PC-3 (cell line): ENCODE measurements at regions of chr13 and their contacts with region 1.

Region 1: GRCh38 chr13:72255908-72256307 is 388.9 kb upstream of the DACH1 start:
- DNase-seq: peak; percentile 70
- ATAC-seq: peak; percentile 84
- H3K4me3 ChIP-seq: no peak overlapping the region
- H3K27ac ChIP-seq: no peak overlapping the region
- H3K4me1 ChIP-seq: peaks cover 22% of the 10 kb centered on the region
- H3K27me3 ChIP-seq: no peaks in the 10 kb centered on the region
- CTCF ChIP-seq: peak; percentile 79

Region 2: GRCh38 chr13:71303144-71303543 is 952.8 kb before region 1 on chr13:
- CTCF ChIA-PET with region 1: no interaction called
- POLR2A ChIA-PET with region 1: no interaction called
- intact Hi-C with region 1: loop called (anchors 1 kb)
- DNase-seq: no peak
- ATAC-seq: peak; percentile 43; the same call in 1 of the 2 replicates
- H3K4me3 ChIP-seq: no peak overlapping the region
- H3K27ac ChIP-seq: no peak overlapping the region
- H3K4me1 ChIP-seq: no peaks in the 10 kb centered on the region
- H3K27me3 ChIP-seq: no peaks in the 10 kb centered on the region
- CTCF ChIP-seq: peak; percentile 24; the same call in 1 of the 2 replicates

Region 3: DNA sequence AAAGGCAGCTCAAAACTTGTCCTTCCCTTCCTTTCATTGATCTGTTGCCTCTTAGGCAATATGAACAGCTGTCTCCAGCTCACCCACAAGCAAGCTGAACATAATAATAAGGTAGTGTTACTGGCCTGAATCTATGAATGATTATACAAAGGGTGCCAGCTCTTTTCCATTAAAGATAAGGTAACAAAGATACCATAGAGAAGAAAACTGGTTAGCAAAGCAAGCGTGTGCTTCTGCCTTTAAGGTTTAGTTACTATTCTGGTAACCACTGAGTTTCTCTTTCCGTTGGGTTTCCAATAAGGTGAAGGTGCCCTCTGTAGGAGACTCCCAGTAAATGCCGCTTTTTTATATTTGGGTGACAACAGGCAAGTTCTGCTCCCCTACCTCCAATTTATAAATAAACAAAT is 376.8 kb before region 1 on chr13:
- CTCF ChIA-PET with region 1: no interaction called
- POLR2A ChIA-PET with region 1: no interaction called
- intact Hi-C with region 1: loop called (anchors 1 kb)
- DNase-seq: peak; percentile 30
- ATAC-seq: peak; percentile 60
- H3K4me3 ChIP-seq: no peak overlapping the region
- H3K27ac ChIP-seq: no peak overlapping the region
- H3K4me1 ChIP-seq: no peaks in the 10 kb centered on the region
- H3K27me3 ChIP-seq: no peaks in the 10 kb centered on the region
- CTCF ChIP-seq: peak; percentile 54

Region 4: DNA sequence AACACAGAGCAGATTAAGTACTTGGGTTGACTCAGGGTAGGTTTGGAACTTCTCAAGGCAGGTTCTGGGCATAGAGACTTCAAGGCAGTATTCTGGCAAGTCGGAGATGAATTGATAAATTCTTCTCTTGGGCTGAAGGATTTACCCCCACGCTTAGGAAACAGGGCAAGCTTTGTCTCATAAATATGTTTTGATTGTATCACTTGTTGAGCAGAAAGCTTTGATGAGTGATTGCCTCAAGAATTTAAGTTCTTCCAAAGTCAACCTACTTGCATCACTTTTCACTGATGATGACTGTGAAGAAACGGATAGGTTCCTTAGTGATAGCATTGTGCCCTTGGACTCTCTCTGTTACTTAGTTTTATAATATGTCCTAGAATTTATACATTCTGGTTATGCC is 130.3 kb before region 1 on chr13:
- CTCF ChIA-PET with region 1: no interaction called
- POLR2A ChIA-PET with region 1: no interaction called
- intact Hi-C with region 1: loop called (anchors 10 kb)
- DNase-seq: peak; percentile 66
- ATAC-seq: no peak
- H3K4me3 ChIP-seq: no peak overlapping the region
- H3K27ac ChIP-seq: peak overlapping the region; percentile 92
- H3K4me1 ChIP-seq: peaks cover 29% of the 10 kb centered on the region
- H3K27me3 ChIP-seq: no peaks in the 10 kb centered on the region
- CTCF ChIP-seq: no peak

Region 5: GRCh38 chr13:72317346-72318109 is 61.6 kb after region 1 on chr13:
- CTCF ChIA-PET with region 1: no interaction called
- POLR2A ChIA-PET with region 1: no interaction called
- intact Hi-C with region 1: no loop called
- DNase-seq: peak; percentile 8
- ATAC-seq: no peak
- H3K4me3 ChIP-seq: no peak overlapping the region
- H3K27ac ChIP-seq: no peak overlapping the region
- H3K4me1 ChIP-seq: no peaks in the 10 kb centered on the region
- H3K27me3 ChIP-seq: no peaks in the 10 kb centered on the region
- CTCF ChIP-seq: no peak

Region 6: GRCh38 chr13:72565893-72566292 is 310.0 kb after region 1 on chr13:
- CTCF ChIA-PET with region 1: interaction called, 3 read pairs
- POLR2A ChIA-PET with region 1: no interaction called
- intact Hi-C with region 1: loop called (anchors 2 kb)
- DNase-seq: peak; percentile 53
- ATAC-seq: peak; percentile 46; the same call in 1 of the 2 replicates
- H3K4me3 ChIP-seq: no peak overlapping the region
- H3K27ac ChIP-seq: no peak overlapping the region
- H3K4me1 ChIP-seq: no peaks in the 10 kb centered on the region
- H3K27me3 ChIP-seq: no peaks in the 10 kb centered on the region
- CTCF ChIP-seq: peak; percentile 69

Region 7: DNA sequence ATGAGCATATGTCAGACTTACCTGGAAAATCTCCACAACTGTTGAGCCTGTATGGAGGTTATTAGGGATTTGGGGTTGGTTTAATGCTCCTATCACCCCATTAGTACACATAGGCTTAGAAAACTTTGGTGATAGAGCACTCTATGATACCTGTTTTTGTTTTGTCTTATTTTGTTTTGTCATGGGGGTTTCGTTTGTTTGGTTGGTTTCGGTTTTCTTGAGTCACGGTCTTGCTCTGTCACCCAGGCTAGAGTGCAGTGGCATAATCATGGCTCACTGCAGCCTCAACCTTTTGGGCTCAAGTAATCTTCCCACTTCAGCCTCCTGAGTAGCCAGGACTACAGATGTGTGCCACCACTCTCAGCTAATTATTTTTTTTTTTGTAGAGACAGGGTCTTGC is 401.5 kb after region 1 on chr13:
- CTCF ChIA-PET with region 1: no interaction called
- POLR2A ChIA-PET with region 1: no interaction called
- intact Hi-C with region 1: no loop called
- DNase-seq: no peak
- ATAC-seq: no peak
- H3K4me3 ChIP-seq: no peak overlapping the region
- H3K27ac ChIP-seq: no peak overlapping the region
- H3K4me1 ChIP-seq: peaks cover 6% of the 10 kb centered on the region
- H3K27me3 ChIP-seq: no peaks in the 10 kb centered on the region
- CTCF ChIP-seq: no peak

Region 8: DNA sequence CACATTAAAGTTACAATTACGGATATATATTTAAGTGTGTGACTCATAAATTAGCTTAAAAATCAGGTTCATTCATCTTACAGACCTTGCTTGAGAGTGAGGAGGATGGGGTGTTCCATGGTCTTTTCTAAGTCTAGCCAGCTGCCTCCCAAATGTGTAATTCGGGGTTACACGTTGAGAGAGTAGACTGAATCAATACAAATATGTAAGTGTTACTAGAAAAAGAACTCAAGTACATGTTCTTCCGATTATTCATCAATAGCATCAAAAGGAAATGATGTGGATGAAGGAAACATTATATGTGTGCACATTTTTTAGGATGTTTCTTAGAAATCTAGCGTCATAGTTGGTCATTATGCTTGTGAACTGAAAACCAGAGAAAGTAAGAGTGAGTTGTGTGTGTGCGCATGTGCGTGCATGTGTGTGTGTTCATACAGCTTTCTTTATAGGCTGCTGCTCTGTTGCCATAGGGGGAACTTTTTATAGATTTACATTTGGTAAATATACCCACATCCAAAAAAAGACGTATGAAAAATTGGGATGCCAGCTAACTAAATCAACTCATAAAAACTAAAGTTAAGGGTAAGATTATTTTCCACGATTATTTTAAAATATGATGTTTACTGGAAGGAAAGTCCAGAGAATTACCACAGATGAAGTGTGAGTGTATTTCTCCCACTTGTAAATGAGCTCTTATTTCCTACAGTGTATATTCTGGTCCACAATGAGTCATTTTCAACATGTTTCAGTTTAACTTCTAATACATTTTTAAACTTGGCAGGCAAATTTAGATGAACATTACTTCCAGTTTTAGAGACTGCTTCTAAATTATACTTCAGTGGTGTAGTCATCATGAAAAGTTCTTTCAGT is 608.5 kb after region 1 on chr13:
- CTCF ChIA-PET with region 1: no interaction called
- POLR2A ChIA-PET with region 1: no interaction called
- intact Hi-C with region 1: no loop called
- DNase-seq: peak; percentile 5
- ATAC-seq: peak; percentile 81
- H3K4me3 ChIP-seq: no peak overlapping the region
- H3K27ac ChIP-seq: peak overlapping the region; percentile 41
- H3K4me1 ChIP-seq: no peaks in the 10 kb centered on the region
- H3K27me3 ChIP-seq: no peaks in the 10 kb centered on the region
- CTCF ChIP-seq: no peak

Region 9: GRCh38 chr13:73913053-73913740 is 1657.3 kb after region 1 on chr13:
- CTCF ChIA-PET with region 1: no interaction called
- POLR2A ChIA-PET with region 1: no interaction called
- intact Hi-C with region 1: no loop called
- DNase-seq: no peak
- ATAC-seq: no peak
- H3K4me3 ChIP-seq: no peak overlapping the region
- H3K27ac ChIP-seq: no peak overlapping the region
- H3K4me1 ChIP-seq: peaks cover 3% of the 10 kb centered on the region; the same call in 1 of the 2 replicates
- H3K27me3 ChIP-seq: no peaks in the 10 kb centered on the region
- CTCF ChIP-seq: no peak